BJ (cell line): ENCODE measurements at regions of chr17 and their contacts with region 1.

Region 1: DNA sequence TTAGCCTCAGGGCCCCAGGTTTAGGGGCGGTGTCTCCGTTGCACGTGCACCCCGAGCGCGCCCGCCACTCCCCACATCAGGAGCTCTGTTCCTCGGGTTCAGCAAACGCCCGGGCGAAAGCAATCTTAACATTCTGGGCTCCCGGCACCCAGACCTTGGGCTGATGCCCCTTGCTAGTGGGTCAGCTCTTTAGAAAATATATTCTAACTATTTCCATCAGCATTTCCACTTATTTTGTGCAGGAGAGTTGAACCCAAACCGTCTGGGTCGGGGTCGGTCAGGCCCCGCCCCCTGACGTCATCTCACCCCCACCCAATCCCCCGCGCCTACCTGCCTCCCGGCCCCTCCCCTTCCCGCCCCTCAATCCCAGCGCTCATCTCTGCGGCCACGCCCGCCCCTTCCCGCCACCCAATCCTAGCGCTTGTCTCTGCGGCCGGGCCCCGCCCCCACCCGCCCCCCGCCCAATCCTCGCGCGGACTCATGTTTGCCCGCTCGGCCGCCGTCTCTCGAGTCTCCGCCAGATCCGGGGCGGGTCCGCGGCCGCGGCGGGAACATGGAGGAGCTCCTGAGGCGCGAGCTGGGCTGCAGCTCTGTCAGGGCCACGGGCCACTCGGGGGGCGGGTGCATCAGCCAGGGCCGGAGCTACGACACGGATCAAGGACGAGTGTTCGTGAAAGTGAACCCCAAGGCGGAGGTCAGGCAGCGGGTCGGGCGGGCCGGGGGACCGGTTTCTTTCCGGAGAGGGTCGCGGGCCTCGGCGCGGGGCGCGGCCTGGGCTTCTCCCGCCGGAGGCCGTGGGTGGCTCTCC is at the start of gene FN3KRP:
- DNase-seq: peak; percentile 26
- H3K4me3 ChIP-seq: peak within 1 kb of the TSS; percentile 81
- H3K27me3 ChIP-seq: no peaks in the 10 kb centered on the region
- CTCF ChIP-seq: no peak
- polyA plus RNA-seq, gene FN3KRP: 24.0 and 24.9 TPM in 2 replicates

Region 2: DNA sequence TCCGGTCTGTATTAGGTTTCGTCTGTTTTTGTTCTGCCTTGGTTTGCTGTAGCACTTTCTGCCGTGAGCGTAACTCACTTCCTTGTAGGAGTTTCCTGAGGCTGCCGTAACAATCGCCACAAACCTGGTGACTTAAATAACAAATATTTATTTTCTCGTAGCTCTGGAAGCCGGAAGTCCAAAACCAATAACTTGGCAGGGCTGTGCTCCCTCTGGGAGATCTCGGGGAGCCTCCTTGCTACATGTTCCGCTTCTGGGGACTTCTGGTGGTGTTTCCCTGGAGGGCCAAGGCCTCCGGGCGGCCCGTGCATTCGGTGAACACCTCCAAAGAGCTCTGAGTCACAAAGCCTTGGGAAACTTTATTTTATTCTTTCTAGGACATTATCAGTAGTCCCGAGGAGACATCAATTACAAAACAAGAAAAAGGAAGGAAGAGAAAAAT is 61.3 kb before region 1 on chr17:
- CTCF ChIA-PET with region 1: no interaction called
- POLR2A ChIA-PET with region 1: no interaction called
- DNase-seq: no peak
- H3K4me3 ChIP-seq: no peak overlapping the region
- H3K27me3 ChIP-seq: no peaks in the 10 kb centered on the region
- CTCF ChIP-seq: no peak

Region 3: GRCh38 chr17:82729479-82730260 is 13.3 kb after region 1 on chr17:
- CTCF ChIA-PET with region 1: no interaction called
- POLR2A ChIA-PET with region 1: no interaction called
- DNase-seq: no peak
- H3K4me3 ChIP-seq: no peak overlapping the region
- H3K27me3 ChIP-seq: no peaks in the 10 kb centered on the region
- CTCF ChIP-seq: no peak

Region 4: GRCh38 chr17:82748756-82749155 is 32.3 kb after region 1 on chr17:
- CTCF ChIA-PET with region 1: no interaction called
- POLR2A ChIA-PET with region 1: interaction called, 20 read pairs
- DNase-seq: no peak
- H3K4me3 ChIP-seq: no peak overlapping the region
- H3K27me3 ChIP-seq: no peaks in the 10 kb centered on the region
- CTCF ChIP-seq: no peak

Region 5: DNA sequence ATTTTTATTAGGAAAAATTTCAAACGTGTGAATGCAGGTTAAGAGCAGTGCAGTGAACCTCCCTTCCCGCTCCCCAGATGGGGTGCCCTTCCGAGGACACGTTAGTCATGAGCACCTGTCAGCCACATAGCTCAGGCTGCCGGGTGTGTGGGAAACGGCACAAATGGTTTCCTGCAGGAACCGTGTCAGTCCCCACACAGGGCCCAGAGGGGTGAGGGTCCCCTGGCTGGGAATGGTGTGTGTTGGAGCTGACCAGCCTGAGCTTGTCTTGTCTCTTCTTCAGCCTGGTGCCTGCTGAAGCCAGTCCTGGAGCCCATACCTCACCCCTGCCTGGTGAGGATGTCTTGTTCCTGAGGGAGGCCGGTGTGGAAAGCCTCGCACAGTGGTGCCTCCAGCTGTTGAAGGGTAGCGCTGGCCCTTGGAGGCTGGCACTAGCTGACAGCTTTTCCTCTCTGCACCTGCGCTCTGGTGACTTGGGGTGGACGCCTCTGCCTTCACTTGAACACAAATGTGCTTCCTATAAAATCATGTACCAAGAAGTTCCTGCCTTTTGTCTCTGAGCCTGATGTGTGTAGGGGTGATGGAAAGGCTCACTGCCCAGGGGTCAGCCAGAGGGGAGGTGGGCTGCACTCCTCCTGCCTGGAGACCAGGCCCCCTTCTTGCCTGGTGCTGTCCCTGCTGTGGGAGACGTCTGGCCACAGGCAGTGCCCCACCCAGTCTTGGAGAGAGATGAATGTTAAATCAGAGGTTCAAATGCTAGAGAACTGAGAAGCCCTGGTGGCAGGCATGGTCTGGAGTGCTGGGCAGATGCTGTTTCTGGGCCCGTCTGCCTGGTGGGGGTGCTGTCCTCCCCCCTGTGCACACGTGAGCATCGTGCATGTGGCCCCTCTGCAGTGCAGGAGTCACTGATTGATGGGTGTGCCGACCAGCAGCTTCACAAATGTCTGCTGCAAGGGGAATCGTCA is 226.0 kb after region 1 on chr17:
- CTCF ChIA-PET with region 1: no interaction called
- POLR2A ChIA-PET with region 1: no interaction called
- DNase-seq: no peak
- H3K4me3 ChIP-seq: no peak overlapping the region
- H3K27me3 ChIP-seq: no peaks in the 10 kb centered on the region
- CTCF ChIP-seq: no peak